Esophagus muscularis mucosa (tissue), 4 donors: ENCODE measurements at regions of chr3 and their contacts with region 1.

Region 1: GRCh38 chr3:196969660-196970546 is 1.3 kb upstream of the PIGZ start:
- DNase-seq: no peak
- H3K4me3 ChIP-seq: peak overlapping the region; percentile 84 to 93 (median 90)
- H3K27ac ChIP-seq: peak overlapping the region; percentile 80 to 83 (median 80)
- H3K4me1 ChIP-seq: peaks cover 11 to 35% (median 24%) of the 10 kb centered on the region in 4 donors
- H3K27me3 ChIP-seq: no peaks in the 10 kb centered on the region
- CTCF ChIP-seq: peak; percentile 81 to 99 (median 92)
- EP300 ChIP-seq: no peak
- POLR2A ChIP-seq: no peak

Region 2: GRCh38 chr3:196837819-196838420 is 132.0 kb before region 1 on chr3:
- intact Hi-C with region 1: loop called (anchors 5 kb)
- DNase-seq: no peak
- H3K4me3 ChIP-seq: no peak overlapping the region
- H3K27ac ChIP-seq: no peak overlapping the region
- H3K4me1 ChIP-seq: peaks cover 0 to 4% (median 0%) of the 10 kb centered on the region in 4 donors
- H3K27me3 ChIP-seq: no peaks in the 10 kb centered on the region
- CTCF ChIP-seq: peak; percentile 62 to 87 (median 68)
- EP300 ChIP-seq: no peak
- POLR2A ChIP-seq: no peak